ENCODE measurements at regions of chr15 and their contacts with region 1.

Region 1: DNA sequence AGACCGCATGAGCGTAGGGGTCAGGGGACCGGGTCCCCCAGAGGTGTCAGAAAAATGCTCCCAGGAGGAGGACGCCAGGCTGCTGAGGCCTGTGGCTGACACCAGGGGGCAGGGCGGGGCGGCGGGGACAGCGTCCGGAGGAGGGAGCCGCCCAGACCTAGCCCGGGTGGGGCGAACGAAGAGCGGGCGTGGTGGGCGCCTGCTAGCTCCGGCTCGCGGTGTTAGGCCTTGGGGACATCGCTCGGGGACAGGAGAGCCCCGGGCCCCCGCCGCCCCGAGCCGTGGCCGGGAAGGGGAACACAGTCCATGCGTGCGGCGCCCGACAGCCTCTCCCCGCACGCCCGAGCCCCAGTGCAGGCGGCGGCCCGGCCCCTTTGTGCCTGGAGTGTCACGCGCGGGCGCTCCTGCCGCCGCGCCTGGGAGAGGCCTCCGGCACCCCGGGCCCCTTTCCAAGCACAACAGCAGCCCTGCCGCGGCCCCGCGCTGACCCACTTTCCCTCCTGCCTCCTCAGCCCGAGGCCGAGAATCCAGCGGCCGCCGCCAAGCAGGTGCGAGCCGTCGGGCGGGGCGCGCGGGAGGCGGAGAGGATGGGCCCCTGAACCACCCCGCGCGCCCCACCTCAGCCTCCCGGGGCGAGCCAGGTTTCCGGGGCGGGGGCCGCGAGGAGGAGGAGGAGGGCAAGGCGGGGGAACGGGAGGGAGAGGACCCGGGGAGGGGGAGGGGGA is 111.0 kb upstream of the KLF13 start:
- DNase-seq: peak; percentile 49
- H3K4me3 ChIP-seq: peak overlapping the region; percentile 9 to 43 (median 34)
- H3K27ac ChIP-seq: peak overlapping the region; percentile 8
- H3K4me1 ChIP-seq: peaks cover 25% of the 10 kb centered on the region
- H3K27me3 ChIP-seq: no peaks in the 10 kb centered on the region
- CTCF ChIP-seq: peak; percentile 34 to 75

Region 2: DNA sequence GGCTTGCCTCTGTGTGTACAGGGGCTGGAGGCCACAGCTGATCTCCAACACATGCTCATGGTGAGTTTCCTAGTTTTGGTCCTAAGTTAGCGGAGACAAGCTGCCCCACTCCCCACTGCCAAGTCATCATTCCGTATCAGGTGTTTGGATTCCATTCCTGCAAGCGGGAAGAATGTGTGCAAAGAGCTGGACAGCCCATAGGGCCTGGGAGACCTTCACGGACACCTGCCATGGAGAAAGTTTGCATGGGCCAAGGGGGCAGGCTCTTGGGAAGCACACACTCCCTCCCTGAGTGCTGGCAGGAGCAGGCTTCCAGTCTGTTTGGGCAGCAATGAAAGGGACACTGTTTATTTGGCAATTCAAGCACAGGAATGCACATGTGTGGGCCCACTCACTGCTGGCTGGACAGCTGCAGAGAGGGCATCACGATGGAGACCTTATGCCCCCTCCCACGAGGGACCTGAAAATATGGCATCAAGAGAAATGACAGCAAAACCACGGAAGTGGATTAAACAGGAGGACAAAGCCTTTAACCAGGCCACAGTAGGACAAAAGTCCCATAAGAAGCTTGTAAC is 260.7 kb after region 1 on chr15:
- CTCF ChIA-PET with region 1: no interaction called
- dilution Hi-C with region 1: loop called (anchors 5 kb)
- in situ Hi-C with region 1: no loop called
- intact Hi-C with region 1: no loop called
- DNase-seq: no peak
- H3K4me3 ChIP-seq: no peak overlapping the region
- H3K27ac ChIP-seq: no peak overlapping the region
- H3K4me1 ChIP-seq: peaks cover 9% of the 10 kb centered on the region
- H3K27me3 ChIP-seq: no peaks in the 10 kb centered on the region
- CTCF ChIP-seq: no peak

Measured in mammary epithelial cell (primary cell).